ENCODE measurements at regions of chr6 and their contacts with region 1.

Region 1: GRCh38 chr6:139375232-139376016 is 976 bp upstream of the CITED2 start:
- DNase-seq: peak; percentile 94
- ATAC-seq: peak; percentile 82

Region 2: GRCh38 chr6:139515511-139515910 is 140.1 kb after region 1 on chr6:
- intact Hi-C with region 1: loop called (anchors 10 kb)
- DNase-seq: no peak
- ATAC-seq: no peak

Region 3: GRCh38 chr6:139753198-139753861 is 377.9 kb after region 1 on chr6:
- intact Hi-C with region 1: loop called (anchors 10 kb)
- DNase-seq: no peak
- ATAC-seq: no peak